ENCODE measurements at regions of chr3 and their contacts with region 1.

Region 1: DNA sequence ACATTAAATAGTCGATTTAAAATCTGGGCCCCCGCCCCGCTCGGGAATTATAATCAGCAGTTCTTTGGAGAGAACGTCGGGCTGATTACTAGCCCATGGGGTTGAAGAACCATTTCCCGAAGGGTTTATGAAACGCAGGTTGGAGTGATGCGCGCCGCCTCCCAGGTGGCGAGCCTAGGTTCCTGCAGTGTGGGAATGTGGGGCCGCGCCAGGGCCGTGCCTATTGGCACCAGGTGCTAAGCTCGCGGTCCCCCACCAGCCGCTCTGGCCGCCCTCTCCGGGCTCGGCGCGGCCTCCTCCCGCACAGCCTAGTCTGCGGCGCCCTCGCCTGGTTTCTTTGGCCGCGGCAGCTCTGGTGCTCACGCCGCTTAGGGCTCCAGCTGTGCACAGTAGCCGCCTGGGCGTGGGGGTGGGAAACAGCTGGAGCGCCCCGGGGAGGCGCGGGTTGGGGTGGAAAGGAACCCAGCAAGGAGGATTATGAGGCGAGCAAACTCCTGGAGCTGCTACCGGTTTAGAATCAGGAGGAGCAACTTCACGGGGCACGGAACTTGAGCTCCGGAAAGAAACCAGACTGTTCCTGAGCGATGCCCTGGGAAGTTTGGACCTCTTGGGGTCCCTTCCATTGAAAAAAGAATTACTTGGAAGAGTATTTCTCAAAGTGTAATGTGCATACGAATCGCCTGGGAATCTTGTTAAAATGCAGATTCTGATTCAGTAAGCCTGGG is 5.6 kb upstream of the MECOM start:
- DNase-seq: no peak
- H3K4me3 ChIP-seq: peak overlapping the region; percentile 48 to 61 (median 52)
- H3K27ac ChIP-seq: peak overlapping the region; percentile 15 to 53 (median 40)
- H3K4me1 ChIP-seq: peaks cover 18 to 27% (median 21%) of the 10 kb centered on the region in 4 donors
- H3K27me3 ChIP-seq: peaks cover 4 to 90% (median 54%) of the 10 kb centered on the region in 4 donors
- CTCF ChIP-seq: peak; percentile 68 to 87 (median 76)
- EP300 ChIP-seq: no peak
- POLR2A ChIP-seq: no peak

Region 2: DNA sequence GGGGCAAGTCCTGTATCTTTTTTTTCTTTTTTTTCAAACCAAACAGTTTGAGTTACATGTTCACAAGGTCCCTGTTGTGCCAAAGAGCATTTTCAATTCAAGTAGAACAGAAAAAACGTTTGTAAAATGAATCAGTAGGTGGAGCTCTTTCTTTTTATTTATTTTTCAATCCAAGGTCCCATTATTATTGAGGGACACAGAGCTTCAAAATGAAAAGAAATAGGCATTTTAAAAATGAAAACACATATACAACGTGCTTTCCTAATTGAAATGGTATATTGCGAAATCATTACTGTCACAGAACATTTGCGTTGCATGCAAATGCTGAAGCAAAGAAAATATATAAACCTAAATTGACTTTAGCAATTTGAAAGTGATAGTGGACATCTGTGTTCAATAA is 716.6 kb before region 1 on chr3:
- intact Hi-C with region 1: loop called (anchors 10 kb)
- DNase-seq: no peak
- H3K4me3 ChIP-seq: peak overlapping the region; percentile 10 to 36 (median 18)
- H3K27ac ChIP-seq: no peak overlapping the region
- H3K4me1 ChIP-seq: peaks cover 0 to 8% (median 3%) of the 10 kb centered on the region in 4 donors
- H3K27me3 ChIP-seq: no peaks in the 10 kb centered on the region
- CTCF ChIP-seq: peak; percentile 29 to 42 (median 30)
- EP300 ChIP-seq: no peak
- POLR2A ChIP-seq: no peak

Region 3: DNA sequence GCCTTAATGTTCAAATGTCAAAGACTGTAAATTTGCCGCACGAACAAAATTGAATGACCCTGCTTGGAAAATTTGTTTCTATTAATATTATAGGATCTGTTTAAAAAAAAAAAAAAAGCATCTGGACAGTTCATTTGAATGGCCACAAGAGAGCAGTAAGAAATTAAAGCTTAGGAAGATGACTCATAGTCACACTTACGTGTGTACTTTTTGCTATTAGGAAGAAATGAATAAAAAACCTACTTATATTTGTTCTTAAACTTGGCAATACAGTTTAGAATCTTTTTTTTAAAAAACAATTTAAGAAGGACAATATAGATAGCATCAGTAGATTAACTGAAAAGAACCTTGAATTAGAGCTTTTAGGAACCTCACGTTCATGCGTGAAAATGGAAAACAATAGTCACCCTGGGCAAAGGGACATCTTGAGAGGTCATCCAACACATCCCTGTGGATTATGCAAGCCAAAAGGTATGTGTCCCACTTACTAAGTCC is 627.4 kb before region 1 on chr3:
- intact Hi-C with region 1: loop called (anchors 10 kb)
- DNase-seq: no peak
- H3K4me3 ChIP-seq: peak overlapping the region in 2 of 4 donors; percentile 2 to 6
- H3K27ac ChIP-seq: no peak overlapping the region
- H3K4me1 ChIP-seq: peaks cover 0 to 6% (median 3%) of the 10 kb centered on the region in 4 donors
- H3K27me3 ChIP-seq: no peaks in the 10 kb centered on the region
- CTCF ChIP-seq: peak; percentile 55 to 71 (median 60)
- EP300 ChIP-seq: no peak
- POLR2A ChIP-seq: no peak

Region 4: GRCh38 chr3:169149349-169149890 is 519.7 kb before region 1 on chr3:
- intact Hi-C with region 1: loop called (anchors 2 kb)
- DNase-seq: no peak
- H3K4me3 ChIP-seq: peak overlapping the region; percentile 17 to 49 (median 30)
- H3K27ac ChIP-seq: peak overlapping the region; percentile 47 to 58 (median 52)
- H3K4me1 ChIP-seq: peaks cover 5 to 36% (median 32%) of the 10 kb centered on the region in 4 donors
- H3K27me3 ChIP-seq: peaks cover 0 to 58% (median 23%) of the 10 kb centered on the region in 4 donors
- CTCF ChIP-seq: peak; percentile 86 to 91 (median 88)
- EP300 ChIP-seq: no peak
- POLR2A ChIP-seq: no peak

Region 5: GRCh38 chr3:169218314-169218983 is 450.7 kb before region 1 on chr3:
- intact Hi-C with region 1: loop called (anchors 10 kb)
- DNase-seq: no peak
- H3K4me3 ChIP-seq: no peak overlapping the region
- H3K27ac ChIP-seq: no peak overlapping the region
- H3K4me1 ChIP-seq: peaks cover 0 to 3% (median 0%) of the 10 kb centered on the region in 4 donors
- H3K27me3 ChIP-seq: no peaks in the 10 kb centered on the region
- CTCF ChIP-seq: peak; percentile 44 to 58 (median 53)
- EP300 ChIP-seq: no peak
- POLR2A ChIP-seq: no peak

Region 6: GRCh38 chr3:169526246-169526645 is 142.9 kb before region 1 on chr3:
- intact Hi-C with region 1: no loop called
- DNase-seq: no peak
- H3K4me3 ChIP-seq: no peak overlapping the region
- H3K27ac ChIP-seq: no peak overlapping the region
- H3K4me1 ChIP-seq: no peaks in the 10 kb centered on the region
- H3K27me3 ChIP-seq: no peaks in the 10 kb centered on the region
- CTCF ChIP-seq: no peak
- EP300 ChIP-seq: no peak
- POLR2A ChIP-seq: no peak

Region 7: GRCh38 chr3:169744366-169745054 is 75.4 kb after region 1 on chr3:
- intact Hi-C with region 1: loop called (anchors 5 kb)
- DNase-seq: no peak
- H3K4me3 ChIP-seq: no peak overlapping the region
- H3K27ac ChIP-seq: no peak overlapping the region
- H3K4me1 ChIP-seq: peaks cover 0 to 6% (median 3%) of the 10 kb centered on the region in 4 donors
- H3K27me3 ChIP-seq: peaks cover 0 to 9% (median 0%) of the 10 kb centered on the region in 4 donors
- CTCF ChIP-seq: peak; percentile 47 to 60 (median 56)
- EP300 ChIP-seq: no peak
- POLR2A ChIP-seq: no peak

Region 8: GRCh38 chr3:170037463-170038433 is 368.6 kb after region 1 on chr3 and contains the start of gene GPR160:
- intact Hi-C with region 1: no loop called
- DNase-seq: no peak
- H3K4me3 ChIP-seq: peak within 1 kb of the TSS; percentile 57 to 70 (median 62)
- H3K27ac ChIP-seq: peak within 1 kb of the TSS in 3 of 4 donors; percentile 18 to 28 (median 23)
- H3K4me1 ChIP-seq: peaks cover 14 to 24% (median 18%) of the 10 kb centered on the region in 4 donors
- H3K27me3 ChIP-seq: peaks cover 0 to 56% (median 19%) of the 10 kb centered on the region in 4 donors
- CTCF ChIP-seq: peak; percentile 21 to 60 (median 49)
- EP300 ChIP-seq: no peak
- POLR2A ChIP-seq: no peak
- total RNA-seq, gene GPR160: 1.2 to 2.9 (median 2.2) TPM

Measured in esophagus muscularis mucosa (tissue), 4 donors.